Activated CD4-positive, alpha-beta T cell treated with anti-CD3 and anti-CD28 coated beads for 36 hours (primary cell): ENCODE measurements at regions of chr1 and their contacts with region 1.

Region 1: DNA sequence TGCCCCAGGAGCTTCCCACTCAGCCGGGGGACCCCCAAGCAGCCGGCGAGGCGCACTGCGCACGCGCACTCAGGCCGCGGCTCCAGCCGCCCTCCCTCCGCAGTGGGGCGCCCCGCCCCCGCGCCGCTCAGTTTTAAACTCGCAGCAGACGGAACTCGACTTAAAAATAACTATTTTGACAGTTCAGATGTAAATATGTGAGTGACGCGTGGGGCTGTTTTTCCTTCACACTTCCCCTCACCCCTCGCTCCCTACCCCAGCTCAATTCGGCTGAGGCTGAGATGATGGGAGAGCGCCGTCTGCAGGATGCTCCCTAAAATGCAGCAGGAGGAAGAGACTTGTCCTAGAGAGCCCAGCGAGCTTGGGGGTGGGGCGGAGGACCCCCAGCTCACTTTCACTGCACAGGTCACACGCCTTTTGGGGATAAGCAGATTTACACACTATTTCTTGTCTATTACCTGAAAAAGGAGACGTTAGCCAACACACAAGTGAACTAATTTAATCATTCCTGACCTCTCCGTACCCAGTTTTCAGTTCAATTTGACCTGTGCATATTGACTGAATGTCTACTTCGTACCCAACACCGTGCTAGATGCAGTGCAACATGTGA is 8.9 kb upstream of the LEMD1 start:
- DNase-seq: peak; percentile 71
- ATAC-seq: peak; percentile 82
- H3K4me3 Mint-ChIP-seq: peak overlapping the region; percentile 73
- H3K27ac Mint-ChIP-seq: peak overlapping the region; percentile 67
- H3K4me1 Mint-ChIP-seq: peaks cover 6% of the 10 kb centered on the region
- H3K27me3 Mint-ChIP-seq: peaks cover 16% of the 10 kb centered on the region

Region 2: GRCh38 chr1:205396967-205397616 is 33.7 kb before region 1 on chr1:
- CTCF ChIA-PET with region 1: interaction called, 9 read pairs
- POLR2A ChIA-PET with region 1: no interaction called
- intact Hi-C with region 1: loop called in 1 of 2 experiments (anchors 2 kb)
- DNase-seq: peak; percentile 38
- ATAC-seq: peak; percentile 68
- H3K4me3 Mint-ChIP-seq: no peak overlapping the region
- H3K27ac Mint-ChIP-seq: no peak overlapping the region
- H3K4me1 Mint-ChIP-seq: no peaks in the 10 kb centered on the region
- H3K27me3 Mint-ChIP-seq: peaks cover 6% of the 10 kb centered on the region

Region 3: GRCh38 chr1:205410581-205411298 is 20.1 kb before region 1 on chr1:
- CTCF ChIA-PET with region 1: interaction called, 8 read pairs
- POLR2A ChIA-PET with region 1: interaction called, 10 read pairs
- intact Hi-C with region 1: no loop called
- DNase-seq: no peak
- ATAC-seq: no peak
- H3K4me3 Mint-ChIP-seq: no peak overlapping the region
- H3K27ac Mint-ChIP-seq: no peak overlapping the region
- H3K4me1 Mint-ChIP-seq: peaks cover 4% of the 10 kb centered on the region
- H3K27me3 Mint-ChIP-seq: peaks cover 12% of the 10 kb centered on the region

Region 4: GRCh38 chr1:205416322-205416721 is 14.5 kb before region 1 on chr1:
- CTCF ChIA-PET with region 1: interaction called, 17 read pairs
- POLR2A ChIA-PET with region 1: interaction called, 7 read pairs
- intact Hi-C with region 1: no loop called
- DNase-seq: no peak
- ATAC-seq: no peak
- H3K4me3 Mint-ChIP-seq: no peak overlapping the region
- H3K27ac Mint-ChIP-seq: no peak overlapping the region
- H3K4me1 Mint-ChIP-seq: no peaks in the 10 kb centered on the region
- H3K27me3 Mint-ChIP-seq: peaks cover 14% of the 10 kb centered on the region